Ascending aorta (tissue), 2 donors: ENCODE measurements at regions of chr2 and their contacts with region 1.

Region 1: DNA sequence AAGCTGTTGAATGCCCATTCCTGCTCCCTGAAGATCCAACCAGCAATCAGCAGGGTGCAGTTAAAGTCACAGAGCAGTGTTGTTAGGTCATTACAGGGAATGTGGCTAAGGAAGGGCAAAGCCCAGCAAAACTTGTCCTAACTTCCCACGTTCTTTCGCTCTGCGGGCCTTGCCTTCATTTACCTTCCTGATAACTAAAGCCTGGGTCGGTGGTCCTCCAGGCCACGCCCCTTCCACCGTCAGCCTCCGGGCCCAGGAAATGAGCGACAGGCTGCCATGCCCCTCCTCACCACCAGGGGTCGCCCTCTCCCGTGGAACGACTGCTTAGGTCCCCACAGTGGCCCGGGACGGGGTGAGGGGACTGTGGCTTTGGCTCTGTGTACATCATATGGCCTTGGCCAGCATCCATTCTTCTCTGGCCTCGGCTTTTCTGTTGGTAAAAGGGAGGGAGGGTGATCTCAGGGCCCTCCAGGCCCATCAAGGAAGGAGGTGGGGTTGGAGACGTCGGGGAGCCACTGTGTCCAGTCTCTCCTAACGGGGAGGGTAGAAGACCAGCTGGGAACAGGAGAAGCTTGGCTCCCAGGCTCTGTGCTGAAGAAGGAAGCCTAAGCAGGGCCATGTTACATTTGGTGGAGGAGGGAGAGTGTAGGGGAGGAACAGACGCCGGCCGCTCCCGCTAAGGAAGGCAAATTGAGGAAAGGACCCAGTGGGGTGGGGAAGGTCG is 2.2 kb downstream of the SH2D6 start:
- DNase-seq: peak; percentile 52 to 95
- H3K4me3 ChIP-seq: peak overlapping the region in 1 of 2 donors; percentile 32
- H3K27ac ChIP-seq: peak overlapping the region; percentile 30 to 60
- H3K4me1 ChIP-seq: peaks cover 6 to 11% of the 10 kb centered on the region in 2 donors
- H3K27me3 ChIP-seq: no peaks in the 10 kb centered on the region
- CTCF ChIP-seq: peak; percentile 100

Region 2: GRCh38 chr2:85308896-85309555 is 111.7 kb before region 1 on chr2:
- intact Hi-C with region 1: no loop called
- DNase-seq: peak in 1 of 2 donors; percentile 79
- H3K4me3 ChIP-seq: no peak overlapping the region
- H3K27ac ChIP-seq: peak overlapping the region; percentile 64 to 66
- H3K4me1 ChIP-seq: peaks cover 4 to 8% of the 10 kb centered on the region in 2 donors
- H3K27me3 ChIP-seq: no peaks in the 10 kb centered on the region
- CTCF ChIP-seq: no peak

Region 3: DNA sequence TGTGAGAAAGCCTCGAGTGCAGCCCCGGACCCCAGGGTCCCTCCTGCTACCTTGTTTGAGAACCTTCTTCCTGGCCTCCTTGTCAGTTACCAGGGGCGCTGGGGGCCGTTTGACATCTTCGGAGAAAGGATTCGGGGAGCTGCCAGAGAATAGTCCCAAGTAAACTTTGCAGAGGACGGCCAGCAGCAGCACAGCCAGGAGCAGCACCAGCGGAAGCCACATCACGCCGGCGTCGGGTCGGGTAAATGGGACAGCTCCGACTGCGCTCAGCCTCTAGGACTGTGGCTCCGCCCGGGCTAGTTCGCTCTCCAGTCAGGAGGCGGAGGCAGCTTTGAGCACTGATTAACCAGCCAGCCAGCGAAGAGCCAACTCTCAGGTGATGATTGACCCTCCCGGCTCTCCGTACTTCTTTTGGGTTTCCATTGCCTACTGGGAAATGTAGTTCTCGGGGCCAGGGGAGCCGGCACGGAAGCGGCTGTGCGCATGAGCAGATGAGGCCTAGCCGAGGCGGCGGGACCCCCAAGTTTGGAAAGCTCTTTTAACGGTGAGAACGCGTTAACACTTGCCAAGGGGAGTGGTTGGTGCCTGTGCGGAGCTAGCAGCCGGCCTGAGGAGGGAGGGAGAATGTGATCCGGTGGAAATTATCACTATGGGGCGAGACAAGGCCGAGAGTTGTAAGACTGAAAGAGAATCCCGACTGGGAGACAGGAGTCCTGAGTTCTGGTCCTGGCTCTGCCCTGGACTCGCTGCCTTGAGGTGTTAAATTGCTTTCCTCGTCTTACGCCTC is 66.2 kb before region 1 on chr2 and contains the starts of genes ELMOD3 and RETSAT:
- intact Hi-C with region 1: loop called (anchors 2 kb)
- DNase-seq: peak; percentile 95 to 100
- H3K4me3 ChIP-seq: peak within 1 kb of the TSS; percentile 81 to 83
- H3K27ac ChIP-seq: peak within 1 kb of the TSS; percentile 80 to 91
- H3K4me1 ChIP-seq: peaks cover 11 to 13% of the 10 kb centered on the region in 2 donors
- H3K27me3 ChIP-seq: no peaks in the 10 kb centered on the region
- CTCF ChIP-seq: no peak
- total RNA-seq, gene ELMOD3: 7.1 TPM
- total RNA-seq, gene RETSAT: 20.6 TPM

Region 4: DNA sequence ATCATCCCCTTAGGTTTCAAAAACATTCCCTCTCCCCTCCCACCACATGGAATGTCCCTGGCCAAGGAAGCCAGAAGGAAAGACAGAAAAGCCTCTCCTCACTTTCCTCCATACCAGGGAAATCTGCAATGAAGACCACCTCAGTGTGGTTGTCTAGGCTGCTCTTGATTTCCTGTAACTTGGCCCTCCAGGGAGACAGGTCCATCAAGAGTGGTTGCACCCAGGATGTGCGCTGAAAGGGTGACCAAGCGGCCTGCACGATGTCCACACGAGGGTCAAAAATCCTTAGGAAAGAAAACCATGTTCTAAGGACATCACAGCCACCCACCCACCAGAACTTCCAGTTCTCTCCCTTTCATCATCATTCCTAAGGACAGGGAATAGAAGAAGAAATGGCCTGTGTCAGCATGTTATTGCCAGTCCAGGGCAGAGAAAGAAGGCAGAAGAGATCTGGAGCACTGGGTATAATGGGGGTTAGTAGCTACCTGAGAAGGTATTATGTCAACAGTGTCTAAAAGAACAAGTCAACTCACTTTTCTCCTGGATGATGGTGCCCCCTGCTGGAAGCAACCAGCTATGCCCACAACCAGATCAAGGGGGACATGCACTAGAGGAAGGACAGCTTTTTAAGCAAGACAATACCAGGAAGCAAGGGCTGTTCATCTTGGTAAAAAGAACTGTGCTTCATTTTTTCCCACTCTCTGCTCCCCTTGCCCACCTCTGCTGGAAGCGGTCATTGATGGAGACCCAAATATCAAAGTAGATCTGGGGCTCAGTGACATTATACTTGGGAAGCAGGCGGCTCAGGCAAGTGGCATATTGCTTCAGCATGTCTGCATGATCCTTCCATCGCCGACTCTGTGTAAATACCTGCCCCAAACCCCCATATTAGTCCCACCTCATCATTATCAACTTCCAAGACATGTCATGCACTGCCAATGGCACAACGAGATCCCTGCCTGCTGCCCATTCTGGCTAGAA is 131.3 kb after region 1 on chr2:
- intact Hi-C with region 1: loop called (anchors 1 kb)
- DNase-seq: peak; percentile 43 to 90
- H3K4me3 ChIP-seq: no peak overlapping the region
- H3K27ac ChIP-seq: no peak overlapping the region
- H3K4me1 ChIP-seq: no peaks in the 10 kb centered on the region
- H3K27me3 ChIP-seq: no peaks in the 10 kb centered on the region
- CTCF ChIP-seq: peak; percentile 87 to 93 (median 88)